ENCODE measurements at regions of chr4 and their contacts with region 1.

Region 1: GRCh38 chr4:6673660-6674499 is 19.8 kb upstream of the S100P start:
- DNase-seq: peak; percentile 93
- H3K4me3 ChIP-seq: peak overlapping the region; percentile 78
- H3K27ac ChIP-seq: peak overlapping the region; percentile 85
- H3K4me1 ChIP-seq: peaks cover 24% of the 10 kb centered on the region
- CTCF ChIP-seq: no peak

Region 2: GRCh38 chr4:6640292-6641163 is 33.4 kb before region 1 on chr4 and contains the start of gene MRFAP1:
- CTCF ChIA-PET with region 1: interaction called, 3 read pairs
- POLR2A ChIA-PET with region 1: interaction called, 12 read pairs
- intact Hi-C with region 1: loop called (anchors 1 kb)
- DNase-seq: peak; percentile 96
- H3K4me3 ChIP-seq: peak within 1 kb of the TSS; percentile 87
- H3K27ac ChIP-seq: peak within 1 kb of the TSS; percentile 83
- H3K4me1 ChIP-seq: peaks cover 19% of the 10 kb centered on the region
- CTCF ChIP-seq: no peak
- total RNA-seq, gene MRFAP1: 90.8 and 142 TPM in 2 replicates

Region 3: DNA sequence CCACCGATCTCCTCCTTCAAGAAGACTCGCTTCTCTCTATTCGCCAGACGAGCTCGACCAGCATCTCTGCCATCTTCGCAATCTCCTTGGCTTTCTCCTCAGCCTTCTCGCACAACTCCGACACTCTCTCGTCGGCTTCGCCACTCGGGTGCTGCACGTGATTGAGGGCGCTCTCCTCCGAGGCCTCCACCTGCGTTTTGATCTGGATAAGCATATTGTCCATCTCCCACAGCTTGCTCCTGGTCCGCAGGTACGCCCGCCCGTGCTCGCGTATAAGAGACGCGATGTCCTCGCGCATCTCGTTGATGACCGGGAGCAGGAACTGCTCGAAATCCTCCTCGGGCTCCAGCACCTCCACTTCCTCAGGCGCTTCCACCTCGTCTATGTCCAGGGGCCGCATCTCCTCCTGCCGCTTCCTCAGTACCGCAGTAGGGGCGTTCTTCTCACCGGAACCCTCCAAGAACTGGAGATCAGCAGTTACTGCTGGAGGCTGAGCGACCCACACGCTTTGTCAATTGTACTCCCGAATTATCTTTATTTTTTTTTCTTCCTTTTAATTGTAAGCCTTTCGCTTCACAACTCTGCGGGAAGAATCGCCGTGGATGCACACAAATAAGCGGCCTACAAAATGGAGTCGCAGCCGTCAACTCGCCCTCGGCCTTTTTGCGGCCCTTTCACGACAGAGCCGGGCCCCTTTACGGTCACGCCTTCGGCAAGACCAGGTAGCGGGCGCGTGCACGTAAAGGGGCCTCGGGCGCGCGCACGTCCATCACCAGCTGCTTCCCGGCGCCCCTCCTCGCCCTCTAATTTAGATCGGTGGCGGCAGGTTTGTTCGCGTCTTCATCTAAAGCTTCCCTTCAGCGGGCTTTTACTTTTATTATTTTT is 35.6 kb after region 1 on chr4 and contains the start of gene MRFAP1L1:
- CTCF ChIA-PET with region 1: no interaction called
- POLR2A ChIA-PET with region 1: interaction called, 10 read pairs
- intact Hi-C with region 1: loop called (anchors 2 kb)
- DNase-seq: peak; percentile 99
- H3K4me3 ChIP-seq: peak within 1 kb of the TSS; percentile 92
- H3K27ac ChIP-seq: peak within 1 kb of the TSS; percentile 73
- H3K4me1 ChIP-seq: peaks cover 41% of the 10 kb centered on the region
- CTCF ChIP-seq: peak; percentile 35; the same call in 1 of the 2 replicates
- total RNA-seq, gene MRFAP1L1: 50.5 and 79.2 TPM in 2 replicates

Region 4: DNA sequence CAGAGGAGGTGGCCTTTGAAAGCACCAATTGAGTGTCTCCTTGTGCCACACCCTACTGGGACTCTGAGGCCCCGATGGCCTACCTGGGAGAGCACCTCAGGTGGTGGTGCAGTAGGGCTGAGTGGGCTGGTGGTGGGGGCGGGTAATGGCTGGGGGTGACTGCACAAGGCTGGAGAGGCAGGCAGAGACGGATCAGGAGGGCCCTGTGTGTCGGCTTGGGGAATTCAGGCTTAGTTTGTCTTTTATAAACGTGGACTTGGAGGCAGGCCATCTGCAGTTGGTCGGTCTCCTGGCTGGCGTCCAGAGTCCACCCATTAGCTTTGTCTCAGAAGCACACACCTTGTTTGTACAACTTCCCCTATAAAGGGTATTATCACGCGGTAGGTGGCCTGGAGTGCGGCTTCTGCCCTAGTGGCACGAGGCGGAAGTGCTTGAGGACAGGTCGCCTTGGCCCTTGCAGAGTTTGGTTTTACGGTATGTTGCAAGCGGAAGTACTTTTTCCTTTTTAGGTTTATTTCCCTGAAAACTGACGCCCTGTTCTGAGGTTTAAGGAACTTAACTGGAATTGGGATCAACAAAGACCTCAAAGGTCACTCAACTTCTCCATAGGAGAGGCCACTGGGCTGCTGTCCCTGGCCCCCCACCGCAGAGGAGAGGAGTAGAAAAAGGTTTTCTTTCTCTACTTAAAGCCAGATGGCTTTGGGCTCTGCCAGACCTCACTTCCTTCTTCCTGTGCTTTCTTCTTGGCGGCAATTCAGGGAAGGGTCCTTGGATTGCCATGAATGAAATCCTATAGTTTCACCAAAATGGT is 243.8 kb after region 1 on chr4:
- CTCF ChIA-PET with region 1: interaction called, 18 read pairs
- POLR2A ChIA-PET with region 1: no interaction called
- intact Hi-C with region 1: no loop called
- DNase-seq: peak; percentile 56
- H3K4me3 ChIP-seq: no peak overlapping the region
- H3K27ac ChIP-seq: no peak overlapping the region
- H3K4me1 ChIP-seq: peaks cover 22% of the 10 kb centered on the region
- CTCF ChIP-seq: peak; percentile 71

Measured in OCI-LY7 (cell line).